Naive thymus-derived CD4-positive, alpha-beta T cell (primary cell): ENCODE measurements at regions of chr13 and their contacts with region 1.

Region 1: GRCh38 chr13:48769107-48769704 is 115.5 kb downstream of the CYSLTR2 start:
- DNase-seq: peak; percentile 44 to 87 (median 82)
- ATAC-seq: peak; percentile 100
- H3K4me3 ChIP-seq: no peak overlapping the region
- H3K4me3 Mint-ChIP-seq: peak overlapping the region in 1 of 10 donors; percentile 4
- H3K27ac ChIP-seq: no peak overlapping the region
- H3K27ac Mint-ChIP-seq: peak overlapping the region in 1 of 9 donors; percentile 0
- H3K4me1 ChIP-seq: no peaks in the 10 kb centered on the region
- H3K4me1 Mint-ChIP-seq: peaks cover 0 to 16% (median 5%) of the 10 kb centered on the region in 7 donors
- H3K27me3 ChIP-seq: no peaks in the 10 kb centered on the region
- H3K27me3 Mint-ChIP-seq: peaks cover 4 to 46% (median 17%) of the 10 kb centered on the region in 5 donors

Region 2: GRCh38 chr13:48000778-48001628 is 768.2 kb before region 1 on chr13 and contains the start of gene SUCLA2:
- CTCF ChIA-PET with region 1: no interaction called
- POLR2A ChIA-PET with region 1: no interaction called
- intact Hi-C with region 1: loop called in 1 of 2 experiments (anchors 5 kb)
- DNase-seq: peak; percentile 75 to 96 (median 88)
- ATAC-seq: peak; percentile 100
- H3K4me3 ChIP-seq: peak within 1 kb of the TSS; percentile 97
- H3K4me3 Mint-ChIP-seq: peak within 1 kb of the TSS; percentile 88 to 97 (median 96)
- H3K27ac ChIP-seq: peak within 1 kb of the TSS; percentile 81
- H3K27ac Mint-ChIP-seq: peak within 1 kb of the TSS; percentile 75 to 96 (median 91)
- H3K4me1 ChIP-seq: peaks cover 7 to 10% of the 10 kb centered on the region in 2 donors
- H3K4me1 Mint-ChIP-seq: peaks cover 24 to 48% (median 42%) of the 10 kb centered on the region in 7 donors
- H3K27me3 ChIP-seq: no peaks in the 10 kb centered on the region
- H3K27me3 Mint-ChIP-seq: peaks cover 0 to 2% (median 0%) of the 10 kb centered on the region in 5 donors
- total RNA-seq, gene SUCLA2: 20.0 to 36.6 (median 26.4) TPM

Region 3: DNA sequence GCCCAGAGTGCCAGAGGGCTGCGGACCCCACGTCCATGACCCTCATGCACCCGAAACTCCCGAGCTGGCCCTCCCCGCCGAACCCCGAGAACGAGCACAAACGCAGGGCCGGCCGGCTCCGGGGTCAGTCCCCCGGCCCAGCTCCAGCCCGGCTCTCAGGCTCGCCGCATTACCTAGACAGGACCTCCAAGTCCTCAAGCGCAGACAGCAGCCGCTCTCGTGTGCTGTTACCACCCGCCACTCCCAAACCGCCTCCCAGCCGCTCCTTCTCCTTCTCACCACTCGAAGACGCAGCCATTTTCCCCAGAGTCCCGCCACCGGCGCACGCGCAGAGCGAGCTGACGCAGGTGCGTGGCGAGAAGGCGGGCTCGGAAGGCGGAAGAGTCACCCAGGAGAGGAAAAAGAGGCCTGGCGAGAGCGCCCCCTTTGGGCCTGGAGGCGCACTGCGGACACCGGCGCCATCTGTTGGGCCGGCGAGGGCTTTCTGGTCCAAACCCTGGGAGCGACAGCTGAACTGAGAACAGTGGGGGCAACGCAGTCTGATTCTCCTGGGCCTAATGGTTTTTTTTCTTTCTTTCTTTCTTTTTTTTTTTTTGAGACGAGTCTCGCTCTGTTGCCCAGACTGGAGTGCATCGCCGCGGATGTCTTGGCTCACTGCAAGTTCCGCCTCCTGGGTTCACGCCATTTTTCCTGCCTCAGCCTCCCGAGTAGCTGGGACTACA is 674.3 kb before region 1 on chr13 and contains the start of gene MED4:
- CTCF ChIA-PET with region 1: no interaction called
- POLR2A ChIA-PET with region 1: no interaction called
- intact Hi-C with region 1: loop called in 1 of 2 experiments (anchors 1 kb)
- DNase-seq: peak; percentile 94 to 99 (median 98)
- ATAC-seq: peak; percentile 100
- H3K4me3 ChIP-seq: peak within 1 kb of the TSS; percentile 90
- H3K4me3 Mint-ChIP-seq: peak within 1 kb of the TSS; percentile 94 to 99 (median 96)
- H3K27ac ChIP-seq: peak within 1 kb of the TSS; percentile 99
- H3K27ac Mint-ChIP-seq: peak within 1 kb of the TSS; percentile 92 to 98 (median 96)
- H3K4me1 ChIP-seq: peaks cover 13 to 26% of the 10 kb centered on the region in 2 donors
- H3K4me1 Mint-ChIP-seq: peaks cover 26 to 56% (median 48%) of the 10 kb centered on the region in 7 donors
- H3K27me3 ChIP-seq: no peaks in the 10 kb centered on the region
- H3K27me3 Mint-ChIP-seq: peaks cover 0 to 9% (median 0%) of the 10 kb centered on the region in 5 donors
- total RNA-seq, gene MED4: 43.4 to 60.9 (median 50.0) TPM

Region 4: GRCh38 chr13:48334534-48335127 is 434.6 kb before region 1 on chr13:
- CTCF ChIA-PET with region 1: interaction called, 26 read pairs
- POLR2A ChIA-PET with region 1: interaction called, 3 read pairs
- intact Hi-C with region 1: loop called (anchors 1 kb)
- DNase-seq: peak in 6 of 9 donors; percentile 27 to 64 (median 48)
- ATAC-seq: peak; percentile 79
- H3K4me3 ChIP-seq: no peak overlapping the region
- H3K4me3 Mint-ChIP-seq: no peak overlapping the region
- H3K27ac ChIP-seq: no peak overlapping the region
- H3K27ac Mint-ChIP-seq: no peak overlapping the region
- H3K4me1 ChIP-seq: no peaks in the 10 kb centered on the region
- H3K4me1 Mint-ChIP-seq: peaks cover 0 to 23% (median 5%) of the 10 kb centered on the region in 7 donors
- H3K27me3 ChIP-seq: no peaks in the 10 kb centered on the region
- H3K27me3 Mint-ChIP-seq: no peaks in the 10 kb centered on the region

Region 5: GRCh38 chr13:48505597-48506091 is 263.6 kb before region 1 on chr13:
- CTCF ChIA-PET with region 1: no interaction called
- POLR2A ChIA-PET with region 1: no interaction called
- intact Hi-C with region 1: loop called in 1 of 2 experiments (anchors 1 kb)
- DNase-seq: peak in 7 of 9 donors; percentile 73 to 88 (median 84)
- ATAC-seq: peak; percentile 85
- H3K4me3 ChIP-seq: peak overlapping the region; percentile 37
- H3K4me3 Mint-ChIP-seq: peak overlapping the region; percentile 51 to 86 (median 76)
- H3K27ac ChIP-seq: peak overlapping the region; percentile 59
- H3K27ac Mint-ChIP-seq: peak overlapping the region; percentile 83 to 98 (median 91)
- H3K4me1 ChIP-seq: peaks cover 34 to 47% of the 10 kb centered on the region in 2 donors
- H3K4me1 Mint-ChIP-seq: peaks cover 47 to 78% (median 61%) of the 10 kb centered on the region in 7 donors
- H3K27me3 ChIP-seq: no peaks in the 10 kb centered on the region
- H3K27me3 Mint-ChIP-seq: peaks cover 0 to 11% (median 0%) of the 10 kb centered on the region in 5 donors

Region 6: DNA sequence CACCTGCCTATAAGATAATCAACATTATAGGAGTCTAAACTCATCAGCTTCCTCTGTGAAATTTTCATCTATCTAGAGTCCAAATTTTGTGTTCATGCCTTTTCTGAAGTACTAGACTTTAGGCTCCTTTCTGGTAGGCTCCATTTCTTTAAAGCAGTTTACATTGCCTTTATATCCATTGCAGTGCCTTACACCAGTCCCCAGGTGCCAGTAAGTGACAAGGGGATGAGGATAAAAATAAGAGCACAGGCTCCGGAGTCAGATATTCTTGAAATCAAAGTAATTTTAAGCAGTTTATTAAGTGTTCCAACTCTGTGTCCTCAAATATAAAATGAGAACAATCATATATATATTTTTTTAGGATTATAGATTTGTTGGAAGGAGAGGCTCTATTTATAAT is 126.0 kb before region 1 on chr13:
- CTCF ChIA-PET with region 1: no interaction called
- POLR2A ChIA-PET with region 1: no interaction called
- intact Hi-C with region 1: loop called in 1 of 2 experiments (anchors 1 kb)
- DNase-seq: no peak
- ATAC-seq: no peak
- H3K4me3 ChIP-seq: no peak overlapping the region
- H3K4me3 Mint-ChIP-seq: no peak overlapping the region
- H3K27ac ChIP-seq: no peak overlapping the region
- H3K27ac Mint-ChIP-seq: no peak overlapping the region
- H3K4me1 ChIP-seq: no peaks in the 10 kb centered on the region
- H3K4me1 Mint-ChIP-seq: peaks cover 2 to 14% (median 5%) of the 10 kb centered on the region in 7 donors
- H3K27me3 ChIP-seq: no peaks in the 10 kb centered on the region
- H3K27me3 Mint-ChIP-seq: peaks cover 0 to 13% (median 6%) of the 10 kb centered on the region in 5 donors

Region 7: DNA sequence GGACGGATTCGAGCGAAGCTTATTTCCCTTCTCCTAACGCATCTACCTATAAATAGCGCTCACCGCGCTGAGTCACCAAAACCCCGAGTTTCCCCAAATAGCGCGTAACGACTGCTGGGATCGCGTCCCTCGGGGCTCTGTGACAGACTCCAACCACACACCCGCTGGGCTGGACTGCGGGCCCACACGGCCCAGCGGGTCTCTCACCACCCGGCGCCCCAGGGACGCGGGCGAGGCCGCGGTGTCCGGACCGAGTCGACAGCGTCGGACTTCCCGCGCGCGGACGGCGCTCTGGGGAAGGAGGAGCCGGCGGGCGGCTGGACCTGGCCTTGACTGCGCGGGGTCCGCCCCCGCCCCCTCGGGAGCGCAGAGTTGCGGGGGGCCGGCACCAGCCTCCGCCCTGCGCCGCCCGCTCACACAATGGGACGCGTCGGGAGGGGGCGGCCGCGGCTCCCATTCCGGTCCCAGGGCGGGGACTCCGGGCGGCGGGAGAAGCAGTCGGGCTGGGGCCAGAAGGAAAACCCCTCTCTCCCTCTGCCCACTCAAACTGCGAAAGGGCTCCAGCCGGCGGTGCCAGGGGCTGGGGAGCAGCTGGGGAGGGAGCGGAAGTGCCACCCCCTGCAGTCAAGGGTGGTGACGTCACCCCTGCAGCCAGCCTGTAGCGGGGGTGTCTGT is 1354.8 kb after region 1 on chr13:
- CTCF ChIA-PET with region 1: no interaction called
- POLR2A ChIA-PET with region 1: no interaction called
- intact Hi-C with region 1: no loop called
- DNase-seq: peak in 7 of 9 donors; percentile 46 to 88 (median 64)
- ATAC-seq: peak; percentile 82
- H3K4me3 ChIP-seq: peak overlapping the region; percentile 52
- H3K4me3 Mint-ChIP-seq: peak overlapping the region; percentile 86 to 96 (median 93)
- H3K27ac ChIP-seq: peak overlapping the region; percentile 95
- H3K27ac Mint-ChIP-seq: peak overlapping the region; percentile 90 to 99 (median 97)
- H3K4me1 ChIP-seq: peaks cover 24 to 29% of the 10 kb centered on the region in 2 donors
- H3K4me1 Mint-ChIP-seq: peaks cover 25 to 61% (median 50%) of the 10 kb centered on the region in 7 donors
- H3K27me3 ChIP-seq: peaks cover 0 to 11% of the 10 kb centered on the region in 2 donors
- H3K27me3 Mint-ChIP-seq: peaks cover 1 to 15% (median 12%) of the 10 kb centered on the region in 5 donors